Right cardiac atrium (tissue), 5 donors: ENCODE measurements at regions of chr1 and their contacts with region 1.

Region 1: DNA sequence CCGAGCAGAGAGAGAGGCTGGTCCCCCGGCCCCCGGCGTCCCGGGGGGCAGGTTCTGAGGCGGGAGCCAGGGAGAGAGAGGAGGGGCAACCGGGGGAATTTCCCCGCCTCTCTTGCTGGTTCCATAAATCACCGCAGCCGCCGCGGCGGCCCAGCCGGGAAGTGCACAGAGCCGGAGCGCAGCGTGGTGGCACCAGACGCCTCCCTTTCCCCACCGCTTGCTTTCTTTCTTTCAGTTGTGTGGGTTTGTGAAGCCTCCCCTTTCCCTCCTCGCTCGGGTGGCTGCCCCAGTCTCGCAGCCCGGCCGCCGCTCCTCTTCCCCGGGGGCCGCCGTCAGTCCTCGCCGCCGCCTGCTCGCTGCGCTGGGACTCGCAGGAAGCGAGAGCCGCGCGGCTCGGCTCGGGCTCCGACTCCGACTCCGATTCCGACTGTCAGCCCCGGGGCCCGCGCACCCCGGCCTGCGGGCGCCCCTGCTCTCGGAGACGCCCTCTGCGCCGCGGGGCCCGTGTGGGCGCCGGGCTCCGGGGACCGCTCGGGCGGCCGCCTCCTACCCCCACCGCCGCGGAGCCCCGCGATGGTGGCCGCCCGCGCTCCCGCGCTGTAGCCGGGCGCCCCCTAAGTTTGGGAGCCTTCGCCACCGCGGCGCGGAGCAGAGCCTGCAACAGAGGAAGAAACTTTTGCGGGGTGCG is at the start of gene CACHD1:
- DNase-seq: peak; percentile 80 to 93 (median 91)
- ATAC-seq: peak; percentile 87 to 88
- H3K4me3 ChIP-seq: peak within 1 kb of the TSS; percentile 77
- H3K27ac ChIP-seq: peak within 1 kb of the TSS; percentile 40
- H3K4me1 ChIP-seq: peaks cover 3% of the 10 kb centered on the region
- H3K27me3 ChIP-seq: no peaks in the 10 kb centered on the region
- total RNA-seq, gene CACHD1: 2.5 to 6.4 (median 3.7) TPM

Region 2: GRCh38 chr1:64539781-64540218 is 69.7 kb after region 1 on chr1:
- intact Hi-C with region 1: loop called in 1 of 4 experiments (anchors 10 kb)
- DNase-seq: peak; percentile 79 to 89 (median 80)
- ATAC-seq: peak; percentile 38 to 52
- H3K4me3 ChIP-seq: peak overlapping the region; percentile 33
- H3K27ac ChIP-seq: no peak overlapping the region
- H3K4me1 ChIP-seq: peaks cover 8% of the 10 kb centered on the region
- H3K27me3 ChIP-seq: no peaks in the 10 kb centered on the region

Region 3: DNA sequence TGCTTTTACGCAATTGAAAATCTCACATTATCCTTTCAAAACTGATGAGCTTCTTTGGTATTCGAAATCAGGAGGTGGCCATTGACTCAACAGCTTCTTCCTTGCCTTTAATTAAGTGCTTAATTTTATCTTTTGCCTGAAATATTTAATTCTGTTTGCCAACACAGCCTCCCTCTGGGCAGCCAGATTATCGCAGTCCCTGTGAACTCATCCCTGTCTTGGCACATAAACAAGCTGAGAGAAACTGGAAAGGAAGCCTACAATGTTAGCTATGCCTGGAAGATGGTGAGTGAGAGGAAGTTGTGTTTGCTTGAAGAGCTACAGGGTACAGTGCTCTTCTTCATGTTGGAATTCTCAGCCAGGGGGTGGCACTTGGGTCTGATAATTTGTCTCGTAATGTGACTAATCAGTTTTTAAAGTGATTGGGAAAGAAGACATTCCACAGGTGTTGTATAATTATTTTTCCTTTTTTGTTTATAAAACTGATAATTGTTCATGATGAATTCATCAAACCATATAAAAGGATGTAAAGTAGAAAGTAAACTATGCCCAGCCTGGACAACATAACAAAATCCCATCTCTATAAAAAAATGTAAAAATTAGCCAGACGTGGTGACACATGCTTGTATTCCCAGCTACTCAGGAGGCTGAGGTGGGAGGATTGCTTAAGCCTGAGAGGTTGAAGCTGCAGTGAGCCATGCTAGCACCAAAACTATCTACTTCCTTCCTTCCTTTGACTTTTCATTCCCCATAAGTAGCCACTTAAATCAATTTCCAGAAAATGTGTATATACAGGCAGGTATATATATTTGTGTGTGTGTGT is 184.6 kb after region 1 on chr1:
- intact Hi-C with region 1: loop called in 1 of 4 experiments (anchors 10 kb)
- DNase-seq: peak in 2 of 3 donors; percentile 21 to 64
- ATAC-seq: peak; percentile 36 to 76
- H3K4me3 ChIP-seq: no peak overlapping the region
- H3K27ac ChIP-seq: no peak overlapping the region
- H3K4me1 ChIP-seq: no peaks in the 10 kb centered on the region
- H3K27me3 ChIP-seq: no peaks in the 10 kb centered on the region

Region 4: DNA sequence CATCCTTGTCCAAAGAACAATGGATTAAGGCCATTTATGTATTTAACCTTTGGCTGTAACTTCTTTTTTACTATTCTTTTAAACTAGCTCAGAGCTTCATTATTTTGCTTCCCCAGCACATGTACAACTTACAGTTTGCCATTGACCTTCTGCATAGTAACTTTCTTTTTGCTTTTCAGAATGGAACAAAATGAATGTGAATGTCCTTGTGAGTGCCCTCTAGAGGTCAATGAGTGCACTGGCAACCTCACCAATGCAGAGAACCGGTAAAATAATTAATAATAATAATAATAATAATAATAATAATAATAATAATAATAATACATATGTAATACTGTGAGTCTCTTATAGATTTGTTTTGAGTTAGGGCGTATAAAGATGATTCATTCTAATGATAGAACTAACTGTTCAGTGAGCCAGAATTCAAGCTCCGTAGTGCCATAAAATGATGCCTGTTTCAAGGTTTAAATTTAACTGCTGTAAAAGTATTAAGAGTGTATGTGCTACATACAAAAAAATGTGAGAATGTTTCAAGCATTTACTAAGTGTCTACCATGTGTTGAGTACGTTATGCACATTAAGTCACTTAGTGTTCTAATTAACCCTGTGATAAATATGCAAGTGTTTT is 205.7 kb after region 1 on chr1:
- intact Hi-C with region 1: loop called in 2 of 4 experiments (anchors 5 to 10 kb)
- DNase-seq: no peak
- ATAC-seq: no peak
- H3K4me3 ChIP-seq: no peak overlapping the region
- H3K27ac ChIP-seq: no peak overlapping the region
- H3K4me1 ChIP-seq: no peaks in the 10 kb centered on the region
- H3K27me3 ChIP-seq: no peaks in the 10 kb centered on the region

Region 5: GRCh38 chr1:64686828-64687724 is 217.0 kb after region 1 on chr1:
- intact Hi-C with region 1: no loop called
- DNase-seq: no peak
- ATAC-seq: peak; percentile 62 to 85
- H3K4me3 ChIP-seq: no peak overlapping the region
- H3K27ac ChIP-seq: no peak overlapping the region
- H3K4me1 ChIP-seq: no peaks in the 10 kb centered on the region
- H3K27me3 ChIP-seq: no peaks in the 10 kb centered on the region